ENCODE measurements at regions of chr1 and their contacts with region 1.

Region 1: GRCh38 chr1:73886716-73887115 is 311.3 kb downstream of the LRRIQ3 start:
- DNase-seq: no peak
- H3K4me3 Mint-ChIP-seq: no peak overlapping the region
- H3K27ac Mint-ChIP-seq: no peak overlapping the region
- H3K4me1 Mint-ChIP-seq: no peaks in the 10 kb centered on the region
- H3K27me3 Mint-ChIP-seq: no peaks in the 10 kb centered on the region
- CTCF ChIP-seq: no peak

Region 2: DNA sequence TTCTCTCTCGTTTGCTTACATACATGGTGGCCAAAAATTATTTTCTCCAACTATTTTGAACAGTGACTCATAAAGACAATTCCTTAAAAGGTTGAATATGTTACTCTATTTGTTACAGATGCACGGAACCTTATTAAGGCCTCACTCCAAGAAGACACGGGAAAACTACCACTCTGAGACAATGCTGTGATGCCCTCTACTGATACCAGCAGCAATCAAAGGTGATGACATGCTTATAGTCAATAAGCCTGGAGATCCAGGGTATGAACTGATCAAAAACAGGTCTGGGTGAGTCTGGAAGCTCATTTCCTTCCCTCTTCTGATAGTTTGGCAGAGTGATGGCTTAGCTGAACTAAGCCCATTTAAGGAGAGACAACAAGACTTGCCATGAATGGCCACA is 251.7 kb before region 1 on chr1:
- CTCF ChIA-PET with region 1: no interaction called
- intact Hi-C with region 1: no loop called
- DNase-seq: no peak
- H3K4me3 Mint-ChIP-seq: no peak overlapping the region
- H3K27ac Mint-ChIP-seq: no peak overlapping the region
- H3K4me1 Mint-ChIP-seq: no peaks in the 10 kb centered on the region
- H3K27me3 Mint-ChIP-seq: no peaks in the 10 kb centered on the region
- CTCF ChIP-seq: no peak

Region 3: GRCh38 chr1:73770109-73770905 is 116.4 kb before region 1 on chr1:
- CTCF ChIA-PET with region 1: no interaction called
- intact Hi-C with region 1: no loop called
- DNase-seq: no peak
- H3K4me3 Mint-ChIP-seq: no peak overlapping the region
- H3K27ac Mint-ChIP-seq: no peak overlapping the region
- H3K4me1 Mint-ChIP-seq: no peaks in the 10 kb centered on the region
- H3K27me3 Mint-ChIP-seq: no peaks in the 10 kb centered on the region
- CTCF ChIP-seq: no peak

Region 4: DNA sequence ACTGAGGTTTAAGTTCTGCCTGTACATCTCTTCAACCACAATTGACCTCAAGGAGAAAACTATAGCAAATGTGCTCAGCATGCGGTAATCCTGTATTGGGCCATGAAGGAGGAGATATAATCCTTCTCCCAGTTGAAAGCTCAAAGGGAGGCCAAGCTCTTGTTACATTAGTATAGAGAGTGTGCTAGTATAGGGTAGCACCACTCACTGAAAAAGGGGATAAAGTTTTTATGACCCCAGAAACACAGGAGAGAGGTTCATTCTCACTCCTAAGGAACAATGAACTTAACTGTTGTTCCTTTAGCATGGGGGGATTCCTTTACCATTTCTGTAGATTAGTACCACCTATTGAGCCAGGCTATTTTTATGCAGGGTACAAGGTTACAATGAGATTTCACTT is 43.6 kb after region 1 on chr1:
- CTCF ChIA-PET with region 1: interaction called, 10 read pairs
- intact Hi-C with region 1: no loop called
- DNase-seq: no peak
- H3K4me3 Mint-ChIP-seq: no peak overlapping the region
- H3K27ac Mint-ChIP-seq: no peak overlapping the region
- H3K4me1 Mint-ChIP-seq: peaks cover 13% of the 10 kb centered on the region
- H3K27me3 Mint-ChIP-seq: no peaks in the 10 kb centered on the region
- CTCF ChIP-seq: no peak

Measured in Calu3 (cell line).